T-cell (primary cell): ENCODE measurements at regions of chr14 and their contacts with region 1.

Region 1: DNA sequence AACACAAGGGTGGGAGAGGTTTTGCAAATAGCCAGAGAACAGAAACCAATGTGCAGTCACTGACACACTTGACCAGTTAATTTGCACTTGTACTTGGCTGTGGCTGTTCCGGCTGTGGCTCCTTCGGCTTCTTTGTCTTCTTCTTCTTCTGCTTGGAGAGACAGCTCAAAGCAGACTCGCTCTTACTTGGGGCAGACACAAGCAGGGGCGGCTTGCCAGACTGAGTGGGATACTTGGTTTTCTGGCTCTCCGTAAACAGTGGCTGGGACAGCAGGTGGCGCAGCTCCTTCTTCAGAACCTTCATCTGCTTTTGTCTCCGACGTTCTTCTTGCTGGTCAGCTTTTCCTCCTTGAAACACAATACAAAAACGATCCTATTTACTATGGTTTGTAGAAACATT is 25.0 kb downstream of the OTUB2 start:
- DNase-seq: peak in 1 of 35 experiments; percentile 12
- ATAC-seq: no peak
- H3K4me3 ChIP-seq: no peak overlapping the region
- H3K4me3 Mint-ChIP-seq: peak overlapping the region in 1 of 3 donors; percentile 27
- H3K27ac ChIP-seq: no peak overlapping the region
- H3K27ac Mint-ChIP-seq: peak overlapping the region in 1 of 2 donors; percentile 22
- H3K4me1 ChIP-seq: peaks cover under 1 to 1% of the 10 kb centered on the region in 2 experiments
- H3K4me1 Mint-ChIP-seq: peaks cover 7 to 27% (median 14%) of the 10 kb centered on the region in 3 donors
- H3K27me3 ChIP-seq: no peaks in the 10 kb centered on the region
- H3K27me3 Mint-ChIP-seq: no peaks in the 10 kb centered on the region

Region 2: GRCh38 chr14:93219103-93219726 is 831.9 kb before region 1 on chr14:
- CTCF ChIA-PET with region 1: no interaction called
- POLR2A ChIA-PET with region 1: no interaction called
- DNase-seq: peak in 32 of 35 experiments; percentile 19 to 74 (median 46)
- ATAC-seq: peak; percentile 67 to 91 (median 82)
- H3K4me3 ChIP-seq: no peak overlapping the region
- H3K4me3 Mint-ChIP-seq: no peak overlapping the region
- H3K27ac ChIP-seq: no peak overlapping the region
- H3K27ac Mint-ChIP-seq: no peak overlapping the region
- H3K4me1 ChIP-seq: no peaks in the 10 kb centered on the region
- H3K4me1 Mint-ChIP-seq: peaks cover 0 to 1% (median 0%) of the 10 kb centered on the region in 3 donors
- H3K27me3 ChIP-seq: no peaks in the 10 kb centered on the region
- H3K27me3 Mint-ChIP-seq: no peaks in the 10 kb centered on the region

Region 3: GRCh38 chr14:94080471-94081289 is 29.6 kb after region 1 on chr14 and contains the start of gene DDX24:
- CTCF ChIA-PET with region 1: interaction called, 3 to 7 read pairs
- POLR2A ChIA-PET with region 1: interaction called, 8 to 12 read pairs
- DNase-seq: peak; percentile 87 to 99 (median 96)
- ATAC-seq: peak; percentile 97 to 99 (median 98)
- H3K4me3 ChIP-seq: peak within 1 kb of the TSS; percentile 96 to 100
- H3K4me3 Mint-ChIP-seq: peak within 1 kb of the TSS; percentile 99 to 100 (median 100)
- H3K27ac ChIP-seq: peak within 1 kb of the TSS; percentile 94
- H3K27ac Mint-ChIP-seq: peak within 1 kb of the TSS; percentile 98 to 99
- H3K4me1 ChIP-seq: peaks cover 30 to 31% of the 10 kb centered on the region in 2 experiments
- H3K4me1 Mint-ChIP-seq: peaks cover 48 to 53% (median 52%) of the 10 kb centered on the region in 3 donors
- H3K27me3 ChIP-seq: no peaks in the 10 kb centered on the region
- H3K27me3 Mint-ChIP-seq: no peaks in the 10 kb centered on the region
- total RNA-seq, gene DDX24: 258 to 448 (median 265) TPM